ENCODE measurements at regions of chr5 and their contacts with region 1.

Region 1: DNA sequence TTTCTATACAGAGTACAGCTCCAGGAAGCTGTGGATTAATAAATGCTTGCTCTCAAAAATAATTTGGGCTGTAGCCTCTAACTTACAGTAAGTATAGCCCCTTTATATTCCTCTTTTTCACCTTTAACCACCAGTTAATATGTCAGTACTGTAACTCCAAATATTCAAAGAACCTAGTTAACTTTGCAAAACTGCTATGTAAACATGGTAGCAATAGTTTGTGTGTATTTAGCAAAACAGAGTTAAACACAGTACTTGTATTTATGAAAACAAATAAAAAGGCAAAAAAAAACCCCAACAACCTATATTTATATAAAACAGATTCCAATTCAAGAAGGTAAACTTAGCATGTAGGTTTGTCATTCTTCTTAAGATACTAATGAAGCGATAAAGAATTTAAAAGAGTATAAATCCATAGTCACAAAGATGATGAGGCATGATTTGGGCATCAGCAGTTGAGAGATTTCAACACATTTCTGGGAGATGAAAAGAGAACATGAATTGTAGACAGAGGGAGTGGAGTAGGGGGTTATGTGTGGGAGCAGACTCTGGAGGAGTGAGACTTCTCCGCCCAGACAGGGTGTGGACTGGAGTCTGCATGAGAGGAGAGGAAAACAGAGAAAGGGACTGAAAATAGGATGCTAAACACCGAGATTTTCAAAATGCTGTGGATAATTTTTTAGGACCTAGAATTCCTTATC is 47.0 kb upstream of the F2RL1 start:
- DNase-seq: no peak
- H3K4me3 Mint-ChIP-seq: no peak overlapping the region
- H3K27ac Mint-ChIP-seq: no peak overlapping the region
- H3K4me1 Mint-ChIP-seq: peaks cover 4% of the 10 kb centered on the region
- H3K27me3 Mint-ChIP-seq: no peaks in the 10 kb centered on the region

Region 2: DNA sequence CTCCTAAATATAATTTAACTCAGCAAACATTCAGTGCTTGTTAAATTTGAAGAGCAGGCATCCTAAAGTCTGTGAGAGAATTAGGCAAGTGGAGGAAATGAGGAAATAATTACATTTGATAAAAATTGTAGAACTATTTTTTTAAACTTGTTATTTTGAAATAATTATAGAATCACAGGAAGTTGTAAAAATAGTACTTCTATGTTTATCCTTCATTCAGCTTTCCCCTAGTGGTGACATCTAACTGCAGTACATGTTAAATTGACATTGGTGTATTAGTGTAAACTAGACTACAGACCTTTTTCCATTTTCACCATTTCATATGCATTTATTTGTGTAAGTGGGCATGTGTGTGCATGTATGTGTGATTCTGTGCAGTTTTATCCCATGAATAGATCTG is 200.3 kb before region 1 on chr5:
- CTCF ChIA-PET with region 1: no interaction called
- POLR2A ChIA-PET with region 1: no interaction called
- intact Hi-C with region 1: no loop called
- DNase-seq: no peak
- H3K4me3 Mint-ChIP-seq: no peak overlapping the region
- H3K27ac Mint-ChIP-seq: no peak overlapping the region
- H3K4me1 Mint-ChIP-seq: peaks cover 18% of the 10 kb centered on the region
- H3K27me3 Mint-ChIP-seq: no peaks in the 10 kb centered on the region

Region 3: GRCh38 chr5:76601470-76601869 is 170.4 kb before region 1 on chr5:
- CTCF ChIA-PET with region 1: interaction called, 147 read pairs
- POLR2A ChIA-PET with region 1: no interaction called
- intact Hi-C with region 1: loop called (anchors 1 kb)
- DNase-seq: no peak
- H3K4me3 Mint-ChIP-seq: no peak overlapping the region
- H3K27ac Mint-ChIP-seq: no peak overlapping the region
- H3K4me1 Mint-ChIP-seq: peaks cover 11% of the 10 kb centered on the region
- H3K27me3 Mint-ChIP-seq: no peaks in the 10 kb centered on the region

Region 4: DNA sequence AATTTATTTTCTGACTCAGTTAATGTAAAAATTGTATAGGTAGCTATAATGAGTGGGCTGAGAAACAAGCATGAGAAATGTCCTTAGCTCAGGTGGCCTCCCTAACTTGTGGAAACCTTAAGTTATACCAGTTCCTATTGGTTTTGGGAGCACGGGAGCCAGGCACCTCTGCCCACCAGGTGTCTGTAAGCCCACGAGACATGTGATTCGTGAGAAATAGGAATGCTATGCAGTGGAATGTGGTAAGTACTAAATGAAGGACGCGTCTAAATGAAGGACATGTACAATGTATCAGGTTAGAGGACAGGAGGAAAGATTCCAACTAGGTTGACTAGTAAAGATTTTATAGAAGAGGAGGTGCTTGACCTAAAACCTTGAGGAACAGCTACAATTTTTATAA is 102.6 kb before region 1 on chr5:
- CTCF ChIA-PET with region 1: interaction called, 18 read pairs
- POLR2A ChIA-PET with region 1: no interaction called
- intact Hi-C with region 1: no loop called
- DNase-seq: no peak
- H3K4me3 Mint-ChIP-seq: no peak overlapping the region
- H3K27ac Mint-ChIP-seq: no peak overlapping the region
- H3K4me1 Mint-ChIP-seq: no peaks in the 10 kb centered on the region
- H3K27me3 Mint-ChIP-seq: no peaks in the 10 kb centered on the region

Region 5: DNA sequence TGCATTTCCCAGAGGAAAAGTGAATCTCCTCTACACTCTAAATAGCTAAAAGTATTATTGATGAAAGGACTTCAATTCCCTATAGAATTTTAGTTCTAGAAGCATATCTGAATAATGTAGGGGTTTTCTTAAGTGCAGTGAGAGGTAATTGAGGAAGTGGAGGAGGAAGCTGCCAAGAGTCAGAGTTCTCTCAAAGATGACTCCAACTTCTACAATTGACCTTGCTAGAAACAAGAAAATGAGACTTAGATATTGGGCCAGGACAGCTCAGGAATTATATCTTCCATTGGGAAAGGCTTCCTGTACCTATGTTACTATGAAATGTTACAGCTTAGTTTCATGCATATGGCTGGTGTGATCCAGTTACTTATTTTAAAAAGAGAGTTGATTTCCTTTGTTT is 66.3 kb before region 1 on chr5:
- CTCF ChIA-PET with region 1: interaction called, 16 read pairs
- POLR2A ChIA-PET with region 1: no interaction called
- intact Hi-C with region 1: no loop called
- DNase-seq: no peak
- H3K4me3 Mint-ChIP-seq: no peak overlapping the region
- H3K27ac Mint-ChIP-seq: no peak overlapping the region
- H3K4me1 Mint-ChIP-seq: peaks cover 4% of the 10 kb centered on the region
- H3K27me3 Mint-ChIP-seq: no peaks in the 10 kb centered on the region

Region 6: GRCh38 chr5:76733049-76733417 is 38.8 kb before region 1 on chr5:
- CTCF ChIA-PET with region 1: interaction called, 37 read pairs
- POLR2A ChIA-PET with region 1: no interaction called
- intact Hi-C with region 1: loop called (anchors 5 kb)
- DNase-seq: peak; percentile 77
- H3K4me3 Mint-ChIP-seq: peak overlapping the region; percentile 46
- H3K27ac Mint-ChIP-seq: peak overlapping the region; percentile 86
- H3K4me1 Mint-ChIP-seq: peaks cover 29% of the 10 kb centered on the region
- H3K27me3 Mint-ChIP-seq: peaks cover 3% of the 10 kb centered on the region

Measured in activated CD4-positive, alpha-beta memory T cell treated with anti-CD3 and anti-CD28 coated beads for 36 hours (primary cell).